GM12878 (cell line): ENCODE measurements at regions of chr9 and their contacts with region 1.

Region 1: DNA sequence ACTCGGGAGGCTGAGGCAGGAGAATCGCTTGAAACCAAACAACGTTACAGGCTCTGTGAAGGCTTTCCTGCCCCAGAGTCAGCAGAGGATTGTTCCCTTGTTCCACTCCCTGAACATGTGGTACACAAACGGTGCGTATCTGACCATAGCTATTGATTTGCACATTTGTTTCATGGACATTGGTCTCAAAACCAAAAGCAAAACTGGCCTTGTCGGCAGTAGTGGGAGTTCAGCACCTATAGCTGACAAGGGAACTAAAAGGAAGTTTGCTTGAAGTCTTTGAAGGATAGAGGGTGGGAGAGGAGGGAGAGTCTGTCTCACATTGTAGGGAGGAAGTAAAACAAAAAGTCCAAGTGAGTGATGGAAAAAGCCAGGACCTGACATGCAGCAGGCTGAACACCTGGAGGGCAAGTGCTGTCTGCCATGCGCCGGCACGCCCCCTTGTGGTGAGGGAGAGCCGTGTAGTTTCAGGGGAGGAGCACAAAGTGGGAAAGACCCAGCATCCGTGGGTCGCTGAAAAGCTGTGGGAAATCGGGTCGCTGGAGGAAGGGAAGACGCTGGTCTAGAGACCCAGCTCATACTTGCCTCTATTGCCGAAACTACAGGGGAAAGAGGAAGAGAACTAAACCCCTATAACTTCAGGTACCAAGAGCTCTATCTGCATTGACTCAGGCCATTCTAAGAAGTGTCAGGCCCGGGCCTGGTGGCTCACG is 58.0 kb downstream of the RAD23B start:
- DNase-seq: peak; percentile 57
- ATAC-seq: peak; percentile 92
- H3K4me3 ChIP-seq: no peak overlapping the region
- H3K27ac ChIP-seq: no peak overlapping the region
- H3K4me1 ChIP-seq: peaks cover 4% of the 10 kb centered on the region; the same call in 1 of the 2 replicates
- H3K27me3 ChIP-seq: no peaks in the 10 kb centered on the region
- CTCF ChIP-seq: peak; percentile 93 to 96 (median 95); a peak in 5 of 6 replicates
- EP300 ChIP-seq: no peak
- POLR2A ChIP-seq: peak; percentile 39; the same call in 1 of the 2 replicates
- RAD21 ChIP-seq: peak; percentile 81

Region 2: DNA sequence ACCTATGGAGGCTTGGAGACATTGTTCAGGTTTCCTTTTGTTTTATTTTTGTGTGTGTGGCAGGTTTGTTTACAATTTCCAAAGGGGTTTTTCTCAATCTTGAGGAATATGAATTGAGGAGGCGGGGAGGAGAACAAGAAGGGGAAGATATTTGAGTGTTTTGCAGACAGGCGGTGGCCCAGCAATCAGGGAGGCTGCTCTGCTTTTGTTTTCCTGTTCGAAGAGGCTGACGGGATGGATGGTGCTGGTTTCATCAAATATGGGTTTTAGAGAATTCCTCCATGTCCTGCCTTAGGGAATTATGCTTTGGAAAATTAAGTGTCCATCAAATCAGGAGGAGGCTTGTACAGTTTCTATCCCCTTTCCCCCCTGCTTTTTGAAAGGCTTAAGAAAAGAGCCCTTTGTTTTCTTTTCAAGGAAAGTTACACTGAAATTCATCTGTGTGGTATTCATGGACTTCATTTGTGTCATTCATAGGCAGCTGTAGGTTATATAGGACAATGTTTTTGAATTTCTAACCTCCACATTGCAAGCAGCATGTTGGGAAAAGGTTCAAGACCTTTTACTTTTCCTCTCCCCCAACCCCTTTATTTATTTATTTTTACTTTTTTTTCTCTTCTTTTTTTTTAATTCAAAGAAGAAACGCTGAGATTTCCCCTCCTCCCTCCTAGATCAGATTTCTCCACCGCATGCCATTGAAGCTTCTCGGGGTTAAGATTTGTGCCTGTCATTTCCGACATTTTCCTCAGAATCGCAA is 370.7 kb before region 1 on chr9:
- CTCF ChIA-PET with region 1: no interaction called
- POLR2A ChIA-PET with region 1: no interaction called
- RAD21 ChIA-PET with region 1: no interaction called
- SMC1A ChIA-PET with region 1: no interaction called
- in situ Hi-C with region 1: no loop called
- intact Hi-C with region 1: no loop called
- DNase-seq: no peak
- ATAC-seq: no peak
- H3K4me3 ChIP-seq: no peak overlapping the region
- H3K27ac ChIP-seq: no peak overlapping the region
- H3K4me1 ChIP-seq: no peaks in the 10 kb centered on the region
- H3K27me3 ChIP-seq: no peaks in the 10 kb centered on the region
- CTCF ChIP-seq: no peak
- EP300 ChIP-seq: no peak
- POLR2A ChIP-seq: no peak
- RAD21 ChIP-seq: no peak

Region 3: DNA sequence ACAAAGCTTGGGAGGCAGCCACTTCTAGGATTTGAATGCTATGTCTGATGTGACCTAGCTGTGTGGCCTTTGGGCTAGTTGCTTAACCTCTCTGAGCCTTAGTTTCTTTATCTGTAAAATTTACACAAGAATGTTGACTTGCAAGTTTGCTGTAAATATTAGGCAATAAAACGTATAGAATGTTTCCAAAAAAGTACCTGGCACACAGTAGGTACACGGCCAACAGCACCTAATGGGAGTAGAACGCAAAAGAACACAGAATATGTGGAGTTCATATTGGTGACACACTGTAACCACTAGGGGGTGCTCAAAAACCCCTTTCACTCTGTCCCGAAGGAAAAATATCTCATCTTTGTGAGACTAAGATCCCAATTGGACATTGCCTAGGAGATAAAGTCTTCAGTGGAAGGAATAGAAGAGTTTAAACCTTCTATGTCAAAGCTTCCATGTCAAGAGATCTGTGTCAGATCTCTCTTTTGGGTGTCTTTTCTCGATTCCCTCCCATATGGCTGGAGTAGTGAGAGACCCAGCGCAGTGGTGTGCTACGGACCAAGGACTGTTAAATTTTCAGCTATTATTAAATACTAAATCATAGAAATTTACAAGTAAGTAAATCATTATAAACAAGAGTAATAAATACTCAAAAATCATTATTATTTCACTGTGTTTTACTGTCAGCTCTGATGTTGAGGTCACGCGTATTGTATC is 203.4 kb before region 1 on chr9:
- CTCF ChIA-PET with region 1: interaction called, 37 read pairs
- POLR2A ChIA-PET with region 1: no interaction called
- RAD21 ChIA-PET with region 1: interaction called, 6 read pairs
- SMC1A ChIA-PET with region 1: interaction called, 8 read pairs
- in situ Hi-C with region 1: no loop called
- intact Hi-C with region 1: no loop called
- DNase-seq: no peak
- ATAC-seq: peak; percentile 70
- H3K4me3 ChIP-seq: no peak overlapping the region
- H3K27ac ChIP-seq: no peak overlapping the region
- H3K4me1 ChIP-seq: no peaks in the 10 kb centered on the region
- H3K27me3 ChIP-seq: peaks cover 0 to 3% of the 10 kb centered on the region in 2 experiments; a peak in 1 of 4 replicates
- CTCF ChIP-seq: peak; percentile 46 to 65 (median 57)
- EP300 ChIP-seq: no peak
- POLR2A ChIP-seq: no peak
- RAD21 ChIP-seq: peak; percentile 55

Region 4: GRCh38 chr9:107227781-107228195 is 113.3 kb before region 1 on chr9:
- CTCF ChIA-PET with region 1: interaction called, 149 read pairs
- POLR2A ChIA-PET with region 1: no interaction called
- RAD21 ChIA-PET with region 1: no interaction called
- SMC1A ChIA-PET with region 1: interaction called, 3 read pairs
- in situ Hi-C with region 1: no loop called
- intact Hi-C with region 1: no loop called
- DNase-seq: no peak
- ATAC-seq: no peak
- H3K4me3 ChIP-seq: no peak overlapping the region
- H3K27ac ChIP-seq: no peak overlapping the region
- H3K4me1 ChIP-seq: no peaks in the 10 kb centered on the region
- H3K27me3 ChIP-seq: no peaks in the 10 kb centered on the region; a peak in 2 of 4 replicates
- CTCF ChIP-seq: no peak
- EP300 ChIP-seq: no peak
- POLR2A ChIP-seq: no peak
- RAD21 ChIP-seq: no peak

Region 5: DNA sequence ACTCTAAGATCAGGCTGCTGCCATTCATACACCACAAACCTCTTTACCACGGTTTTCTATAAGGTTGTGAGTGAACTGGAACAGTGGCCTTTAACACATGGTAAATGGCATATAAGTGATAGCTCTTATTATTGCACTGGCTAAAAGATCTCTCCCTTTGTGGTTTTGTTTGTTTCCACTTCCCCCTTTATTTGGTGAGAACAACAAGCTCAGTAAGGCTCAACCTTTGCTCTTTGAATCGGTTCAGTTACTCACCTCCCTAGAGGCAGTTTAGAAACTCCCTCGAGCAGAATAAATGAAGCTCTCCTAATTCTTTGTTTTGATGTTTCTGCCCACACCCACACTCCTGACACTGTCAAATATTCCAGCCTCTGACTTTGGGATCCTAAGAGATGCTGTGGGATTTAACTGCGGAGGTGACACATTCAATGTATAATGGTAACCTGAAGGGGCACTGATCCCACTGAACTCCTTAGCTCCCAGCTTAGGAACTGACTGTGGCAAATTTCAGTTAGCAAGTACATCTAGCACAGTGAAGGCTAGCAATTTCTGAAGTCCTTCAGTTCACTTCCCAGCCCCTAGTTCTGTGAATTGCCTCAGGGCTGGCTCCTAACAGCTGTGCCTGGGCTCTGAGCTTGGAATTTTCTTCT is 80.5 kb before region 1 on chr9:
- CTCF ChIA-PET with region 1: interaction called, 34 read pairs
- POLR2A ChIA-PET with region 1: interaction called, 7 read pairs
- RAD21 ChIA-PET with region 1: interaction called, 16 read pairs
- SMC1A ChIA-PET with region 1: interaction called, 21 read pairs
- in situ Hi-C with region 1: no loop called
- intact Hi-C with region 1: no loop called
- DNase-seq: peak; percentile 88
- ATAC-seq: peak; percentile 98
- H3K4me3 ChIP-seq: peak overlapping the region; percentile 27; the same call in 1 of the 2 replicates
- H3K27ac ChIP-seq: peak overlapping the region; percentile 36
- H3K4me1 ChIP-seq: peaks cover 11% of the 10 kb centered on the region
- H3K27me3 ChIP-seq: no peaks in the 10 kb centered on the region
- CTCF ChIP-seq: no peak
- EP300 ChIP-seq: peak; percentile 95 to 97
- POLR2A ChIP-seq: no peak
- RAD21 ChIP-seq: no peak

Region 6: GRCh38 chr9:107292821-107293542 is 48.1 kb before region 1 on chr9:
- CTCF ChIA-PET with region 1: interaction called, 33 read pairs
- POLR2A ChIA-PET with region 1: interaction called, 5 read pairs
- RAD21 ChIA-PET with region 1: interaction called, 3 read pairs
- SMC1A ChIA-PET with region 1: interaction called, 5 read pairs
- in situ Hi-C with region 1: no loop called
- intact Hi-C with region 1: no loop called
- DNase-seq: no peak
- ATAC-seq: peak; percentile 6; the same call in 1 of the 3 replicates
- H3K4me3 ChIP-seq: no peak overlapping the region
- H3K27ac ChIP-seq: no peak overlapping the region
- H3K4me1 ChIP-seq: 0 out of 2 replicates have a peak, but pooled peaks cover 4% of the 10 kb centered on the region
- H3K27me3 ChIP-seq: no peaks in the 10 kb centered on the region
- CTCF ChIP-seq: no peak
- EP300 ChIP-seq: no peak
- POLR2A ChIP-seq: no peak
- RAD21 ChIP-seq: no peak

Region 7: DNA sequence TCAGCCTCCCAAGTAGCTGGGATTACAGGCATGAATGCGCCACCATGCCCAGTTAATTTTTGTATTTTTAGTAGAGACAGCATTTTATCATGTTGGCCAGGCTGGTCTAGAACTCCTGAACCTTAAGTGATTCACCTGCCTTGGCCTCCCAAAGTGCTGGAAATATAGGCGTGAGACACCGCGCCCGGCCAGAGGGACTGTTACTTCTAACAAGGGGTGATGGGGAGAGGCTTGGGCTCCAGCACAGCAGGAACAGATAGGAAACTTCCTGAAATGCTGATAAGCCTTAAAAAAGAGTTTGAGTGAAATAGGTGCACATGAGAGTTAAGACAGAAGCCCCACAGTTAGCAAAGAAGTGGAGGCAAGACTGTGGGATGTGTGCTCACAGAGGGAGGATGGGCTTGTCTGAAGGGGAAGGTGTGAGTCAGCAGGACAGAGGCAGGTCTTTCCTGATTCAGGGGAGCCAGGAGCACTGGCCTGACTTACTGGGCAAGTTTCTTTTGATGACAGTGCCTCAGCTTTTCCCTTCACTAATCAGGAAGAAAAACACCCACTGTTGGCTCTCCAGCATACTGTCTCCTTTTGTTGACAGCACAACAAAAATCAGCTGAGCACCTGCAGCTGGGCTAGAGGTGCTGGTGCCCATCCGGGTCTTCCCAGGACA is 10.4 kb after region 1 on chr9:
- CTCF ChIA-PET with region 1: interaction called, 13 read pairs
- POLR2A ChIA-PET with region 1: interaction called, 4 read pairs
- RAD21 ChIA-PET with region 1: interaction called, 6 read pairs
- SMC1A ChIA-PET with region 1: interaction called, 6 read pairs
- in situ Hi-C with region 1: no loop called
- intact Hi-C with region 1: no loop called
- DNase-seq: no peak
- ATAC-seq: no peak
- H3K4me3 ChIP-seq: no peak overlapping the region
- H3K27ac ChIP-seq: no peak overlapping the region
- H3K4me1 ChIP-seq: no peaks in the 10 kb centered on the region
- H3K27me3 ChIP-seq: no peaks in the 10 kb centered on the region; a peak in 1 of 4 replicates
- CTCF ChIP-seq: no peak
- EP300 ChIP-seq: no peak
- POLR2A ChIP-seq: no peak
- RAD21 ChIP-seq: no peak